Dorsolateral prefrontal cortex (tissue), 120 donors: ENCODE measurements at regions of chr15 and their contacts with region 1.

Region 1: DNA sequence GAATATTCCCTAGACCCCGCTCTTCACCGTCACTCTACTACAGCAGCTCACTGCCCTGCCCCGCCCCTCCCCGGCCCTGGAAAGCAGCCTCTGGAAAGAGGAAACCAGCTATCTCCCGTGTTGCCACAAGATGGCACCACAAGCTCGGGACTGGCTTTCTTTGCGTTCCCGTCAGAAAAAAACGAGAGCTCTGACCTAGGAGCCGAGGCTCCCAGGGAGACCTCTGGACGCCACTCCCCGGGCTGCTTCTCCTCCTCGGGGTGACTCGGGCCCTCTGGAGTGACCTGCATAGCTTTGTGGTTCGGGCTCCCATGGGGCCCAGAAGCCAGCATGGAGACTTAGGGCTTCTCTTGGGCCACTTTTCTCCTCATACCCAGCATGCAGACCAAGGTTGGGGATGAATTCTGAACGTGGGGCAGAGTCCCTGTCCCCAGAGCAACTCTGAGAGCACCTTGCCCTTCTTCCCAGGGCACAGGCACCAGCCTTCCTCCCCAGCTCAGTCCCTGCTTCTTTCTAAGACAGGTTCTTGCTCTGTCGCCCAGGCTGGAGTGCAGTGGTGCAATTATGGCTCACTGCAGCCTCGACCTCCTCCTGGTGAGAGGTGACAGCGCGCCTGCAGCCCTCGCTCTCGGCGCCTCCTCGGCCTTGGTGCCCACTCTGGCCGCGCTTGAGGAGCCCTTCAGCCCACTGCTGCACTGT is 19.0 kb downstream of the STOML1 start:
- DNase-seq: peak; percentile 67 to 82 (median 78)
- H3K4me3 ChIP-seq: peak overlapping the region in 47 of 59 donors; percentile 8 to 60 (median 39)
- H3K27ac ChIP-seq: peak overlapping the region in 2 of 59 donors; percentile 6 to 41
- H3K27me3 ChIP-seq: peaks cover 0 to 12% (median 0%) of the 10 kb centered on the region in 45 donors
- CTCF ChIP-seq: peak; percentile 30 to 90 (median 79)

Region 2: GRCh38 chr15:74036271-74037170 is 63.4 kb after region 1 on chr15:
- intact Hi-C with region 1: loop called (anchors 5 kb)
- DNase-seq: peak in 7 of 10 donors; percentile 41 to 73 (median 65)
- H3K4me3 ChIP-seq: no peak overlapping the region
- H3K27ac ChIP-seq: peak overlapping the region in 1 of 59 donors; percentile 27
- H3K27me3 ChIP-seq: no peaks in the 10 kb centered on the region
- CTCF ChIP-seq: peak in 53 of 56 donors; percentile 31 to 68 (median 51)

Region 3: DNA sequence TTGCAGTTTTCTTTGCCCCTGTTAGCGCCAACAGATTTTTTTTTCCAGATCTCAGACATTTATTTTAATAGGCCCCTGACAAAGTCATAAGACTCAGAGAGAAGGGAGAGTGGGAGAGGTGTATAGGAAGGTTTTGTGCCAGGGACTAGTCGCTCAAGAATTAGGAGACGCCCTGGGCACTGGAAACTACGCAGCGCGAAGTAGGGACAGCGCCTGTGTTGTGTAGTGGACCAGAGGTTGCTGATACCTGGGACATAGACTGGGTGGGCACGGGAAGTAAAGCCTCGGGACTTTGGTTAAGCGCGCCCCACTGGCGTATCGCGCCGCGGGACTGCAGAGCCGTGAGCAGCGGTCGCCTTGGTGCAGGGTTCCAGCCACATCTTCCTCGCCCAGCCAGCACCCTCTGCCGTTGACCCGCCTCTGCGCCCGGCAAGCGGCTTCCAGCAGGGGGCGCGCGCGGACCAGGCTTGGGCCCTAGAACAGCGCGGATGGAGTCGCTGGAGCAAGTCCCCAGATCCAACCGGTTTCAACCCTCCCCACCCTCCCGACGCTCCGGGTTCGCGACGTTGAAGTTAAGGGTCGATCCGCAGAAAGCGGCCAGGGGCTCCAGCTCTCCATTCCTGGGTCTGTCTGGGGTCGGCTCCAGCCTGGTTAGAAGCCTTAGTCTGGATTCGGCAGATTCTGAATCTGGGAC is 154.3 kb after region 1 on chr15:
- intact Hi-C with region 1: loop called (anchors 10 kb)
- DNase-seq: peak; percentile 79 to 94 (median 88)
- H3K4me3 ChIP-seq: peak overlapping the region in 58 of 59 donors; percentile 11 to 62 (median 42)
- H3K27ac ChIP-seq: peak overlapping the region in 6 of 59 donors; percentile 8 to 72 (median 62)
- H3K27me3 ChIP-seq: peaks cover 0 to 62% (median 43%) of the 10 kb centered on the region in 45 donors
- CTCF ChIP-seq: peak; percentile 86 to 100 (median 99)

Region 4: GRCh38 chr15:74134387-74135027 is 161.4 kb after region 1 on chr15:
- intact Hi-C with region 1: loop called (anchors 10 kb)
- DNase-seq: peak in 1 of 10 donors; percentile 38
- H3K4me3 ChIP-seq: no peak overlapping the region
- H3K27ac ChIP-seq: peak overlapping the region in 2 of 59 donors; percentile 29 to 73
- H3K27me3 ChIP-seq: peaks cover 0 to 79% (median 55%) of the 10 kb centered on the region in 45 donors
- CTCF ChIP-seq: peak in 30 of 56 donors; percentile 4 to 48 (median 31)